Activated T-helper 1 cell treated with anti-CD3 and anti-CD28 coated beads, Interleukin-12 subunit alpha, Interleukin-12 subunit beta, Interleukin-2, Interleukin-4 antibody, amounts not matched to agents 30 ng/mL and 10 ng/mL and 1 ng/mL, durations not matched to agents 14 hours and 24 hours and 36 hours (primary cell): ENCODE measurements at regions of chr2 and their contacts with region 1.

Region 1: GRCh38 chr2:29309090-29310029 is 194.1 kb downstream of the CLIP4 start:
- DNase-seq: peak; percentile 41
- H3K4me3 Mint-ChIP-seq: no peak overlapping the region
- H3K27ac Mint-ChIP-seq: no peak overlapping the region
- H3K4me1 Mint-ChIP-seq: peaks cover 27% of the 10 kb centered on the region
- H3K27me3 Mint-ChIP-seq: peaks cover 32% of the 10 kb centered on the region

Region 2: DNA sequence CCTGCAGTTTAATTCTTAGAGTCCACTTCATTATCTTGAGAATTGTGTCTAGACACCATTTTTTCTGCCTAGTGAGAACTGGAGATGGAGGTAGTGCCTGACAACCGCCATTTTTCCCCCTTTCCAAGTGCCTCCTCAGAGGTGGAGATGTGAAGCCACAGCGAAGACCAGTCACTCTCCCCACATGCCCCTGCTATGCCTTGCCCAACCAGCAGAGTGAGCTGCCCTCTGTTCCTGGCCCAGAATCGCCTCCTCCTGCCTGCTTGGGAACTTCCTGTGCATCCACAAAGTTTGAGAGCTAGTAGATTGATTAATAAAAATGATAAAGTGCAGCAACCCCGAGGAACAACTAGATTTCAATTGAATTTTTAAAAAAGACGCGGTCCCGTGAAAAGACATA is 70.9 kb before region 1 on chr2:
- intact Hi-C with region 1: no loop called
- DNase-seq: no peak
- H3K4me3 Mint-ChIP-seq: no peak overlapping the region
- H3K27ac Mint-ChIP-seq: no peak overlapping the region
- H3K4me1 Mint-ChIP-seq: no peaks in the 10 kb centered on the region
- H3K27me3 Mint-ChIP-seq: peaks cover 4% of the 10 kb centered on the region

Region 3: DNA sequence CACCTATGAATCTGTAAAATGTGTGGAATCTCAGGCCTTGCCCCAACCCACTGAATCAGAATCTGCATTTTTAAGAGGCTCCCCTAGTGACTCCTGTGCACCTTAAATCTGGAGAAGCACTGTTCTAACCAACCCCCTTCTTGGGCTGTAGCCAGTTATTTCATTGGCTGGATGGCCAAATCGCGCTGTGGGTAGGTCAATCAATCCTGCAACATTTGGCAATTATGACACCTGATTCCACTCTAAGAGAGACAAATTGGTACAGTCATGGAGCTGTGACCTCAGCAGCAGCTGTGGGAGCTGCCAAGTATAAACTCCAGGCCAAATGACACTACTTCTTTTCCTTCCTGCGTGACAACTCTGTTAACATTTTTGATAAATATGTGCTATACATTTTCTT is 14.6 kb after region 1 on chr2:
- intact Hi-C with region 1: loop called (anchors 1 kb)
- DNase-seq: no peak
- H3K4me3 Mint-ChIP-seq: no peak overlapping the region
- H3K27ac Mint-ChIP-seq: no peak overlapping the region
- H3K4me1 Mint-ChIP-seq: peaks cover 50% of the 10 kb centered on the region
- H3K27me3 Mint-ChIP-seq: peaks cover 15% of the 10 kb centered on the region

Region 4: DNA sequence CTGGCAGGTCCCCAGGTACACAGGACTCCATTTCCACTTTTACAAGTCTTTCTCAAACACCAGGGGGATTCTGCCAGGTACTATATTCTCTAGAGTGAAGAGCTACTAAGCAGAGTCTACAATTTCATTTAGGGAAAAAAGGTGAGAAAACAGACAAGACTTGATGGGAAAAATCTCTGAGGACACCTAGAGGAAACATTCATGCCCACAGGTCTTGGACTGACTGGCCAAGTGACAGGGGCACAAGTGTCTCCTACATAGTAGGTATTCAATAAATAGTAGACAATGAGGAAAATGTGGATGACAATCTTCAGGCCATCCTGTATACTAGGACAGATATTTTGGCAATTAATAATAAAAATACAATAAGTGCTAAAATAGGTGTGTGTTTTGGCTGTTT is 34.5 kb after region 1 on chr2:
- intact Hi-C with region 1: loop called (anchors 2 kb)
- DNase-seq: no peak
- H3K4me3 Mint-ChIP-seq: no peak overlapping the region
- H3K27ac Mint-ChIP-seq: no peak overlapping the region
- H3K4me1 Mint-ChIP-seq: no peaks in the 10 kb centered on the region
- H3K27me3 Mint-ChIP-seq: peaks cover 13% of the 10 kb centered on the region

Region 5: GRCh38 chr2:29841386-29842004 is 532.1 kb after region 1 on chr2:
- intact Hi-C with region 1: loop called (anchors 1 kb)
- DNase-seq: no peak
- H3K4me3 Mint-ChIP-seq: no peak overlapping the region
- H3K27ac Mint-ChIP-seq: no peak overlapping the region
- H3K4me1 Mint-ChIP-seq: no peaks in the 10 kb centered on the region
- H3K27me3 Mint-ChIP-seq: peaks cover 5% of the 10 kb centered on the region

Region 6: GRCh38 chr2:30072250-30072842 is 763.0 kb after region 1 on chr2:
- intact Hi-C with region 1: loop called (anchors 2 kb)
- DNase-seq: peak; percentile 49
- H3K4me3 Mint-ChIP-seq: no peak overlapping the region
- H3K27ac Mint-ChIP-seq: no peak overlapping the region
- H3K4me1 Mint-ChIP-seq: no peaks in the 10 kb centered on the region
- H3K27me3 Mint-ChIP-seq: peaks cover 9% of the 10 kb centered on the region